WTC11 (cell line): ENCODE measurements at regions of chr14 and their contacts with region 1.

Region 1: DNA sequence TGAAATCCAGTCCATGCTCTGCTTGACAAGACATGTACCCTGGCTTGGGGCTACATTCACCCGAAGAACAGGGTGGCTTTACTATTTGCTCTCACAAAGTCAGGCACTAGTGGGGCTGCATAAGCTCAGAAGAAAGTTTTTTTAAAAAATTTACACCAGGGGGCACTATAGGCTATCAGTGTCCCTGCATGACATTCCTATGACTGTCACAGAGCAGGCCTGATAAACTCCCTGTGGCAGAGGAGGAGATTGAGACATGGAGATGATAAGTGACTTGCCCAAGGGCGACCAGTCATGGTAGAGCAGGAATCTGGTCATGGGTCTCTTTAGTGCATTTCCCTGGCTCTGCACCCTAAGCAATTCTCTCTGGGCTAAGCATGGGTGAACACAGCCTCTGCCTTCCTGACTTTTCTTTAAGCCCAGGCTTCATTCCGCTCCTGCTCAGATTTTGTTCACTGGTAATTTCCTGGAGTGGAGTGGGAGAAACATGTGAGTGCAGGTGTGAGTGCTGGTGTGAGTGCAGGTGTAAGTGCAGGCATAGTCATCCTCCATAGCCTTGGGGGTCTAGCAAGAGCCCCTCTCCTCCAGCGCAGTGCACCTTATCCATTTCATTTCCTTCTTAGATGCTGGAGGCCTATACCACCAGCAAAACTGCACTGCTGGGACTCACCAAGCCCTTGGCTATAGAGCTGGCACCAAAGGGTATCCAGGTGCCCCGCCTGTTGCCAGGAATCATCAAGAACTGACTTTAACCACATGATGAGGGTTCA is 91.6 kb downstream of the DHRS2 start:
- DNase-seq: no peak
- ATAC-seq: peak; percentile 86
- H3K4me3 Mint-ChIP-seq: no peak overlapping the region
- H3K27ac Mint-ChIP-seq: no peak overlapping the region
- H3K4me1 Mint-ChIP-seq: no peaks in the 10 kb centered on the region
- H3K27me3 Mint-ChIP-seq: no peaks in the 10 kb centered on the region
- CTCF ChIP-seq: peak; percentile 61

Region 2: DNA sequence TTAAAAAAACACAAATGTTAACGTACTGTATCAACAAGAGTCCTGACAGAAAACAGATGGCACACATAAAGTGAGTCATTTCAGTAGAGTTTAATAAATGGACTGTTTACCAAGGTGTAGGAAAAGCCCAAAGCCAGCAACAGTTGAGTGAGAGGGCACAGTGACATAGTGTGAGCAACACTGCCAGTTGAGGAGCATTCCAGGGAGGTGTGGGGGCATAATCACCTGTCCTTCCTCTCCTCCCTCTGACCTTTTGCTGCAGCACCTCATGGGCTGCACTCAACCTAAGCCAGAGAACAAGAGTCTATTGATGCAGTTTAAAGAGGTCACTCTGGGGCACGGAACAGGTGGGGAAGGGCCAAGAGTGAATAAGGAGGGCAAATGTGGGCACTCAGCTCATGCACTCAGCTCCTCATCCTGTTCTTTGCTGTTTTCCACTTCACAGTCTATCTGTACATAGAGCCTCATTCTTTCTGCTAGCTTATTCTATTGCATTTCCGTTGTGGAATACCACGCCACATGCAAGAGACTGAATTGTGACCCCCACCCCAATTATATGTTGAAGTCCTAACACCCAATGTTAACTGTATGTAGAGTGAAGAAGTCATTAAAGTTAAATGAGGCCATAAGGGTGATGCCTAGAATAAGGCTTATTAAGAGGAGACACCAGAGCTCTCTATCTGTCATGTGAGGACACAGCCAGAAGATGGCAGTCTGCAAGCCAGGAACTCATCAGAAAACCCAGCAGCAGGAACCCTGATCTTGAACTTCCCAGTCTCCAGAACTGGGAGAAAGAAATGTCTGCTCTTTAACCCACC is 62.2 kb before region 1 on chr14:
- CTCF ChIA-PET with region 1: interaction called, 14 read pairs
- POLR2A ChIA-PET with region 1: no interaction called
- DNase-seq: peak; percentile 67
- ATAC-seq: peak; percentile 85
- H3K4me3 Mint-ChIP-seq: no peak overlapping the region
- H3K27ac Mint-ChIP-seq: no peak overlapping the region
- H3K4me1 Mint-ChIP-seq: peaks cover 5% of the 10 kb centered on the region
- H3K27me3 Mint-ChIP-seq: no peaks in the 10 kb centered on the region; the same call in 1 of the 2 replicates
- CTCF ChIP-seq: 0 out of 2 replicates have a peak, but pooled peaks have one; percentile 32

Region 3: GRCh38 chr14:23694085-23694975 is 33.4 kb before region 1 on chr14:
- CTCF ChIA-PET with region 1: interaction called, 11 read pairs
- POLR2A ChIA-PET with region 1: no interaction called
- DNase-seq: peak; percentile 37
- ATAC-seq: peak; percentile 68
- H3K4me3 Mint-ChIP-seq: no peak overlapping the region
- H3K27ac Mint-ChIP-seq: no peak overlapping the region
- H3K4me1 Mint-ChIP-seq: 0 out of 2 replicates have a peak, but pooled peaks cover 3% of the 10 kb centered on the region
- H3K27me3 Mint-ChIP-seq: peaks cover 6% of the 10 kb centered on the region
- CTCF ChIP-seq: no peak

Region 4: GRCh38 chr14:23793532-23793931 is 65.8 kb after region 1 on chr14:
- CTCF ChIA-PET with region 1: no interaction called
- POLR2A ChIA-PET with region 1: no interaction called
- DNase-seq: no peak
- ATAC-seq: no peak
- H3K4me3 Mint-ChIP-seq: no peak overlapping the region
- H3K27ac Mint-ChIP-seq: no peak overlapping the region
- H3K4me1 Mint-ChIP-seq: no peaks in the 10 kb centered on the region
- H3K27me3 Mint-ChIP-seq: peaks cover 9% of the 10 kb centered on the region; the same call in 1 of the 2 replicates
- CTCF ChIP-seq: no peak